Activated T-helper 1 cell treated with anti-CD3 and anti-CD28 coated beads, Interleukin-12 subunit alpha, Interleukin-12 subunit beta, Interleukin-2, Interleukin-4 antibody, amounts not matched to agents 30 ng/mL and 10 ng/mL and 1 ng/mL, durations not matched to agents 14 hours and 24 hours and 36 hours (primary cell): ENCODE measurements at regions of chr1 and their contacts with region 1.

Region 1: DNA sequence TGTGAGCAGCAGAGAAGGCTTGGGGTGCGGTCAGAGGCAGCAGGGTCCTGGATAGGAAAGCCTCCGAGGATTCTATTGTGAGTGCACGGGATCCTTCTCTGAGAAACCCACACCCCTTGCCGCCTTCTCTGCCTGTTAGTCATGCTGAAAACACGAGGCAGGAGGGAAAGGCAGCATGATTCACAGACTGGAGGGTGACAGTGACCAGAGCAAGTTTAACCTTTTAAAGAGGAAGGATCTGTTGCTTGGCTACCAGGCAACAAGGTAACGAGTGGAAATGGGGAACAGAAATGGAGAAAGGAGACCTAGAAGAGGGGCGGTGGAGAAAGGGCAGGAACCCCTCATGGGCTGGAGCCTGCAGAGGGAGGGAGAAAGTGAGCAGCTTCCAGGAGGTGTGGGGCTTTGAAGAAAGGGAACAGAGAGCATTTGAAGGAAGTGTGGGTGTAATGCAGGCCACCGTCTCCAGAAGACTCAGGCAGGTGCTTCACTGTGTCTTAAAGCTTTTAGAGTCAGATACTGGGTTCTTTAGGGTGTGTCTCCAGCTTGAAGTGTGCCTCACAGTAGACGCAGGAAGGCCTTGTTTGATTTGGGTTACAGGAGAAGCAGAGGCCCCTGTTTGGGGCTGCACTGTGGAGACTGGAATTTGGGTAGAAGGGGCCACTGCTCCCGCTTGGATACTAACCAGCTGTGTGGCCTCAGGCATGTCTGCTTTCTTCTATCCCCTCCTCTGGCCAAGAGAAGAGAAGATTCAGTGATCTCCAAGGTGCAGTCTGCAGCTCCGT is 19.1 kb downstream of the OPTC start:
- DNase-seq: peak; percentile 19
- H3K4me3 Mint-ChIP-seq: peak overlapping the region; percentile 50
- H3K27ac Mint-ChIP-seq: peak overlapping the region; percentile 95
- H3K4me1 Mint-ChIP-seq: peaks cover 30% of the 10 kb centered on the region
- H3K27me3 Mint-ChIP-seq: no peaks in the 10 kb centered on the region

Region 2: DNA sequence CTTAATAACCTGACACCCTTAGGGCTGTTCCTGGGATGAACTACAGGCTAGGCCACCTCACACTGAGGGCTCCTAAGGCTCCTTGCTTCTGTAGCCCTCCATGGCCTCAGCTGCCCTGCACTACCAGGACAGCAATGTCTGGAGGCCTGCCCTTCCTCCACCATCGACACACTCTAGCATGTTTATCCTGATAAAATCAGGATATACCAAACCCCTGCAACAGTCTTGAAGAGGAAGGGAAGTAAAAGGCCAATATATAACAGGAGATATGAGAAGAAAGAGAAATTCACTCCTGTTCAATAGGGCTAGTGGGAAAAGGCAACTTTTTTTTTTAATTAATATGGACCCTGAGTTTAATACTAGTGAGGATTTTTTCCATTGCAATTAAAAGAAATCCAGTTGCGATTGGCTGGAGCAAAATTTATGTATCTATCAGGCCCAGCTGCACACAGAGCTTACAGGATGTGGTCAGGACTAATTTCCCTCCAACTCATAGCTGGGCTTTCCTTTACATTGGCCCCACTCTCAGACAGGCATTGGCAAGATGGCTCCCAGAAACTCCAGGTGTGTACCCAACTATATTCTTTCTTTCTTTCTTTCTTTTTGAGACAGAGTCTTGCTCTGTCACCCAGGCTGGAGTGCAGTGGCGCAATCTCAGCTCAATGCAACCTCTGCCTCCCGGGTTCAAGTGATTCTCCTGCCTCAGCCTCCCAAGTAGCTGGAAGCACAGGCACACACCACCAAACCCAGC is 100.1 kb after region 1 on chr1:
- intact Hi-C with region 1: loop called (anchors 5 kb)
- DNase-seq: no peak
- H3K4me3 Mint-ChIP-seq: no peak overlapping the region
- H3K27ac Mint-ChIP-seq: peak overlapping the region; percentile 74
- H3K4me1 Mint-ChIP-seq: peaks cover 57% of the 10 kb centered on the region
- H3K27me3 Mint-ChIP-seq: no peaks in the 10 kb centered on the region